ENCODE measurements at regions of chr12 and their contacts with region 1.

Region 1: GRCh38 chr12:4030929-4031702 is 157.9 kb upstream of the PARP11 start:
- DNase-seq: peak; percentile 97
- H3K4me3 Mint-ChIP-seq: peak overlapping the region; percentile 62
- H3K27ac Mint-ChIP-seq: peak overlapping the region; percentile 78
- H3K4me1 Mint-ChIP-seq: peaks cover 19% of the 10 kb centered on the region
- H3K27me3 Mint-ChIP-seq: no peaks in the 10 kb centered on the region
- CTCF ChIP-seq: no peak

Region 2: GRCh38 chr12:3872800-3873636 is 158.1 kb before region 1 on chr12 and contains the start of gene PARP11:
- CTCF ChIA-PET with region 1: no interaction called
- POLR2A ChIA-PET with region 1: interaction called, 3 read pairs
- intact Hi-C with region 1: loop called (anchors 5 kb)
- DNase-seq: peak; percentile 95
- H3K4me3 Mint-ChIP-seq: peak within 1 kb of the TSS; percentile 97
- H3K27ac Mint-ChIP-seq: peak within 1 kb of the TSS; percentile 98
- H3K4me1 Mint-ChIP-seq: peaks cover 10% of the 10 kb centered on the region
- H3K27me3 Mint-ChIP-seq: peaks cover 9% of the 10 kb centered on the region
- CTCF ChIP-seq: no peak
- total RNA-seq, gene PARP11: 7.0 and 10.3 TPM in 2 replicates

Region 3: GRCh38 chr12:3998968-3999826 is 31.9 kb before region 1 on chr12:
- CTCF ChIA-PET with region 1: interaction called, 403 read pairs
- POLR2A ChIA-PET with region 1: interaction called, 6 read pairs
- intact Hi-C with region 1: no loop called
- DNase-seq: peak; percentile 78
- H3K4me3 Mint-ChIP-seq: no peak overlapping the region
- H3K27ac Mint-ChIP-seq: peak overlapping the region; percentile 86
- H3K4me1 Mint-ChIP-seq: peaks cover 12% of the 10 kb centered on the region
- H3K27me3 Mint-ChIP-seq: peaks cover 8% of the 10 kb centered on the region
- CTCF ChIP-seq: no peak

Region 4: GRCh38 chr12:4011597-4011996 is 19.5 kb before region 1 on chr12:
- CTCF ChIA-PET with region 1: interaction called, 43 read pairs
- POLR2A ChIA-PET with region 1: interaction called, 16 read pairs
- intact Hi-C with region 1: no loop called
- DNase-seq: peak; percentile 83
- H3K4me3 Mint-ChIP-seq: no peak overlapping the region
- H3K27ac Mint-ChIP-seq: peak overlapping the region; percentile 51
- H3K4me1 Mint-ChIP-seq: peaks cover 16% of the 10 kb centered on the region
- H3K27me3 Mint-ChIP-seq: no peaks in the 10 kb centered on the region
- CTCF ChIP-seq: no peak

Region 5: DNA sequence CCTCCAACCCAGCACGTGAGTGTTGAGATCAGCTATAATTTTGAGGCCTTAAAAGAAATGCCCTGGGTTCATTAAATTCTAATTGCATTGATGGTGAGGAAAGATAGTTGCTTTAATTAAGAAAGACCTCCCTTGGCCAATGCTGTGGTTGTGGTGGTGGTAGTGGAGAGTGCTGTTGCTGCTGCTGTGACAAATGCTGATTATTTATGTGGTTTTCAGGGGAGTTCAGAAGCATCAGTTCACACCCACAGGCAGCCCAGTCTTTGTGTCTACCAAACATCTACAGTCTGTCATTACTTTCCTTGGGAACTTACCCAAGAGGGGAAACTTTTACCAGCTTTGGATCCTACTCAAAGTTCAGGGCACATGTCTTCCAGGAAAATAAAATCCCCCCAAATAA is 20.5 kb after region 1 on chr12:
- CTCF ChIA-PET with region 1: no interaction called
- POLR2A ChIA-PET with region 1: no interaction called
- intact Hi-C with region 1: no loop called
- DNase-seq: no peak
- H3K4me3 Mint-ChIP-seq: no peak overlapping the region
- H3K27ac Mint-ChIP-seq: no peak overlapping the region
- H3K4me1 Mint-ChIP-seq: no peaks in the 10 kb centered on the region
- H3K27me3 Mint-ChIP-seq: peaks cover 56% of the 10 kb centered on the region
- CTCF ChIP-seq: no peak

Region 6: DNA sequence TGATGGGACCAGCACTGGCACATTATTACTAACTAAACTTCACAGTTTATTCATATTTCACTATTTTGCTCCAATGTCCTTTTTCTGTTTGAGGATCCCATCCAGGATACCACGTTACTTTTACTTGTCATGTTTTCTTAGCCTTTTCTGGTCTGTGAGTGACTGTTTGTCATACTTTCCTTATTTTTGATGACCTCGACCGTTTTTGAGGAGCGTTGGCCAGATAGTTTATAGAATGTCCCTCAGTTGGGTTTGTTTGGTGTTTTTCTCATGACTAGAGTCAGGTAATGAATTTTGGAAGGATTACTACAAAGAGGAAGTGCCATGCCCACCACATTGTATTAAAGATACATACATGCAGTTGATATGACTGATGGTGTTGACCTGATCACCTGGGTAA is 43.0 kb after region 1 on chr12:
- CTCF ChIA-PET with region 1: no interaction called
- POLR2A ChIA-PET with region 1: no interaction called
- intact Hi-C with region 1: no loop called
- DNase-seq: no peak
- H3K4me3 Mint-ChIP-seq: no peak overlapping the region
- H3K27ac Mint-ChIP-seq: no peak overlapping the region
- H3K4me1 Mint-ChIP-seq: no peaks in the 10 kb centered on the region
- H3K27me3 Mint-ChIP-seq: peaks cover 66% of the 10 kb centered on the region
- CTCF ChIP-seq: no peak

Region 7: GRCh38 chr12:4246116-4246515 is 215.0 kb after region 1 on chr12:
- CTCF ChIA-PET with region 1: no interaction called
- POLR2A ChIA-PET with region 1: no interaction called
- intact Hi-C with region 1: no loop called
- DNase-seq: no peak
- H3K4me3 Mint-ChIP-seq: no peak overlapping the region
- H3K27ac Mint-ChIP-seq: no peak overlapping the region
- H3K4me1 Mint-ChIP-seq: no peaks in the 10 kb centered on the region
- H3K27me3 Mint-ChIP-seq: peaks cover 64% of the 10 kb centered on the region
- CTCF ChIP-seq: no peak

Region 8: GRCh38 chr12:4287325-4288211 is 256.5 kb after region 1 on chr12:
- CTCF ChIA-PET with region 1: no interaction called
- POLR2A ChIA-PET with region 1: no interaction called
- intact Hi-C with region 1: no loop called
- DNase-seq: no peak
- H3K4me3 Mint-ChIP-seq: no peak overlapping the region
- H3K27ac Mint-ChIP-seq: no peak overlapping the region
- H3K4me1 Mint-ChIP-seq: no peaks in the 10 kb centered on the region
- H3K27me3 Mint-ChIP-seq: no peaks in the 10 kb centered on the region
- CTCF ChIP-seq: no peak

Measured in MCF 10A (cell line).